ENCODE measurements at regions of chr16 and their contacts with region 1.

Region 1: GRCh38 chr16:2155091-2156021 is at the start of gene TRAF7:
- DNase-seq: peak; percentile 99
- ATAC-seq: peak; percentile 92 to 93
- total RNA-seq, gene TRAF7: 31.1 to 34.9 TPM

Region 2: GRCh38 chr16:1677802-1678496 is 477.4 kb before region 1 on chr16 and contains the start of gene JPT2:
- intact Hi-C with region 1: no loop called
- DNase-seq: peak; percentile 98
- ATAC-seq: peak; percentile 99
- total RNA-seq, gene JPT2: 29.1 to 35.3 TPM

Region 3: GRCh38 chr16:1734123-1734832 is 421.1 kb before region 1 on chr16:
- intact Hi-C with region 1: no loop called
- DNase-seq: no peak
- ATAC-seq: no peak

Region 4: GRCh38 chr16:2213817-2214720 is 58.7 kb after region 1 on chr16:
- intact Hi-C with region 1: loop called in 1 of 2 experiments (anchors 5 kb)
- DNase-seq: no peak
- ATAC-seq: no peak